Mammary epithelial cell (primary cell): ENCODE measurements at regions of chr12 and their contacts with region 1.

Region 1: DNA sequence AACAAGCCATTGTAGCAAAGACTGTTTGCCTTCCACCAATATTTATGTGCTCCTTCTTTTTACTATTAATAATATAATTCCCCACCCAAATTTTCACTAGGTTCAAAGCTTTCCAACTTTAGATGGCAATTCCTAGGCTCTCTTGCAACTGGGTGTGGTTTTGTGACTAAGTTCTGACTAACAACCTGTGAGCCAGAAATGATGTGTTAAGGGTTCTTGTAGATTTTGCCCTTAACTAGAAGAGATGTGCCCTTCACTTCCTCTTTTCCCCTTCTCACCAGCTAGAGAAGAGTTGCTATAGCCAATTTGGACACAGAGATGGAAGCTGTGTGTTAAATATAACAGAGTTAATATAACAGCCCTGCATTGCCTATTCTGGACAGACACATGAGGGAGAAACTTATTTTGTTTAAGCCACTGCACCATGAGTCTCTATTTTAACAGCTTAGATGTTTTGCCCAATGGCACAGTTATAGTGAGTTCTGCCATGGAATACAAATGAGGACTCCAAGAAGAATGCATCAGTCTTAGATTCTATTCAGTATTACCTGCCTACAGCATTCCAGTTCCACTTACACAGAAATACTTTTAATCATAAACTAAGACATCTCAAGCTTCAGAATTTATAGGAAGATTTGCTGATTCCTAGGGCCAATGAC is 216.2 kb downstream of the DUSP6 start:
- DNase-seq: peak; percentile 83
- H3K4me3 ChIP-seq: no peak overlapping the region
- H3K27ac ChIP-seq: peak overlapping the region; percentile 24
- H3K4me1 ChIP-seq: peaks cover 20% of the 10 kb centered on the region
- H3K27me3 ChIP-seq: no peaks in the 10 kb centered on the region
- CTCF ChIP-seq: no peak

Region 2: GRCh38 chr12:88468581-88468980 is 667.5 kb before region 1 on chr12:
- CTCF ChIA-PET with region 1: no interaction called
- dilution Hi-C with region 1: no loop called
- in situ Hi-C with region 1: no loop called
- intact Hi-C with region 1: no loop called
- DNase-seq: no peak
- H3K4me3 ChIP-seq: no peak overlapping the region
- H3K27ac ChIP-seq: no peak overlapping the region
- H3K4me1 ChIP-seq: peaks cover 18% of the 10 kb centered on the region
- H3K27me3 ChIP-seq: no peaks in the 10 kb centered on the region
- CTCF ChIP-seq: no peak

Region 3: DNA sequence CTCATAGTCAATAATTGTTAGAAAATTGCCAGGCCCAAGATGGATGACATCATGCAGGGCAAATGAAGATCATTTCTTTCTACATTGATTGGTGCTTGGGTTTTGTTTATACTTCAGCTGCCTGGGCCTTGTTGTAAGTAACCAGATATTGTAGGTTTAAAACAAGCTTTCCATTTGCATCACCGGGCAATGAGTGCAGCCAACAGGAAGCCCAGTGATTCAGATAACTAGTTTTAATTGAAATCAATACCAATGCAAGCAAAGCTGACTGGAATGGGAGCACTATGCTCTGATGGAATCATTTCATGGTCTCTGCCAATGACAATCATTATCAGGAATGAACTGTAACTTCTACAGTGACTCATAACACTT is 63.1 kb before region 1 on chr12:
- CTCF ChIA-PET with region 1: no interaction called
- dilution Hi-C with region 1: no loop called
- in situ Hi-C with region 1: no loop called
- intact Hi-C with region 1: no loop called
- DNase-seq: no peak
- H3K4me3 ChIP-seq: no peak overlapping the region
- H3K27ac ChIP-seq: no peak overlapping the region
- H3K4me1 ChIP-seq: peaks cover 14% of the 10 kb centered on the region
- H3K27me3 ChIP-seq: no peaks in the 10 kb centered on the region
- CTCF ChIP-seq: no peak

Region 4: GRCh38 chr12:89098441-89099112 is 37.5 kb before region 1 on chr12:
- CTCF ChIA-PET with region 1: no interaction called
- dilution Hi-C with region 1: loop called (anchors 5 kb)
- in situ Hi-C with region 1: no loop called
- intact Hi-C with region 1: no loop called
- DNase-seq: no peak
- H3K4me3 ChIP-seq: no peak overlapping the region
- H3K27ac ChIP-seq: no peak overlapping the region
- H3K4me1 ChIP-seq: no peaks in the 10 kb centered on the region
- H3K27me3 ChIP-seq: no peaks in the 10 kb centered on the region
- CTCF ChIP-seq: no peak